ENCODE measurements at regions of chr2 and their contacts with region 1.

Region 1: GRCh38 chr2:110204780-110205385 is at the start of gene NPHP1:
- DNase-seq: peak; percentile 83
- H3K4me3 Mint-ChIP-seq: peak within 1 kb of the TSS; percentile 90
- H3K27ac Mint-ChIP-seq: peak within 1 kb of the TSS; percentile 95
- H3K4me1 Mint-ChIP-seq: peaks cover 18% of the 10 kb centered on the region
- H3K27me3 Mint-ChIP-seq: no peaks in the 10 kb centered on the region
- total RNA-seq, gene NPHP1: 0.12 and 0.70 TPM in 2 replicates

Region 2: DNA sequence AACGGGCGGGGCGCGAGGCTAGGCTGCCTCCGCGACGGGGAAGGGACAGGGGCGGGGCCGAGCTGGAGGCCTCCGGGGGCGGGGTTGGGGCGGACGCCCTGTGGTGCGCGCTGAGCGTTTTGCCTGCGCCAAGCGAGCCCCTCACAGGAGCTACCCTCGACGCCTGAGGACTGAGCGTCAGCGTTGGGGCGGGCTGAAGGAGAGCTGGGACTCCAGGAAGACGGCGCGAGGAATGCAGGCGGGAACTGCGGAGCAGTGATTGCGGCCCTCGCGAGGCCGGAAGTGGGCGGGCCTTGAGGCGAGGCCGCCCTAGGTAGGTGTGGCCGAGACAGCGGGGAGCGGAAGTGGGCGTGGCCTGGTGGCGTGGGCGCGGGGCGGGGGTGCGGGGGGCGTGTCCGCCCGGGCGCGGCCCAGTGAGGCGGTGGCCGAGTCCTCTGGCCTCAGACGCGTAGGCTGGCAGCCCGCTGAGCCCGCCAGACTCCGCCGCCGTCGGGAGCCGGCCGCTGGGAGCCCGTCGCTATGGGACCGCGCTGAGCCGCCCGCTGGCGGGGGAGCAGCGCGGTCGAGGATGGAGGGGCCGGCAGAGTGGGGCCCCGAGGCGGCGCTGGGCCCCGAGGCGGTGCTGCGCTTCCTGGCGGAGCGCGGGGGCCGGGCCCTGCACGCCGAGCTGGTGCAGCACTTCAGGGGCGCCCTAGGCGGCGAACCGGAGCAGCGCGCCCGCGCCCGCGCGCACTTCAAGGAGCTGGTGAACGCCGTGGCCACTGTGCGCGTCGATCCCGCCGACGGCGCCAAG is 590.8 kb before region 1 on chr2 and contains the starts of genes SEPTIN10 and SOWAHC:
- intact Hi-C with region 1: loop called (anchors 5 kb)
- DNase-seq: peak; percentile 72
- H3K4me3 Mint-ChIP-seq: peak within 1 kb of the TSS; percentile 80
- H3K27ac Mint-ChIP-seq: peak within 1 kb of the TSS; percentile 75
- H3K4me1 Mint-ChIP-seq: peaks cover 8% of the 10 kb centered on the region
- H3K27me3 Mint-ChIP-seq: peaks cover 64% of the 10 kb centered on the region
- total RNA-seq, gene SEPTIN10: 0.13 and 0.66 TPM in 2 replicates
- total RNA-seq, gene SOWAHC: 0.24 and 0.31 TPM in 2 replicates

Region 3: GRCh38 chr2:110173523-110173922 is 31.4 kb before region 1 on chr2:
- intact Hi-C with region 1: no loop called
- DNase-seq: no peak
- H3K4me3 Mint-ChIP-seq: no peak overlapping the region
- H3K27ac Mint-ChIP-seq: no peak overlapping the region
- H3K4me1 Mint-ChIP-seq: peaks cover 4% of the 10 kb centered on the region
- H3K27me3 Mint-ChIP-seq: peaks cover 20% of the 10 kb centered on the region